KBM-7 (cell line): ENCODE measurements at regions of chr17 and their contacts with region 1.

Region 1: DNA sequence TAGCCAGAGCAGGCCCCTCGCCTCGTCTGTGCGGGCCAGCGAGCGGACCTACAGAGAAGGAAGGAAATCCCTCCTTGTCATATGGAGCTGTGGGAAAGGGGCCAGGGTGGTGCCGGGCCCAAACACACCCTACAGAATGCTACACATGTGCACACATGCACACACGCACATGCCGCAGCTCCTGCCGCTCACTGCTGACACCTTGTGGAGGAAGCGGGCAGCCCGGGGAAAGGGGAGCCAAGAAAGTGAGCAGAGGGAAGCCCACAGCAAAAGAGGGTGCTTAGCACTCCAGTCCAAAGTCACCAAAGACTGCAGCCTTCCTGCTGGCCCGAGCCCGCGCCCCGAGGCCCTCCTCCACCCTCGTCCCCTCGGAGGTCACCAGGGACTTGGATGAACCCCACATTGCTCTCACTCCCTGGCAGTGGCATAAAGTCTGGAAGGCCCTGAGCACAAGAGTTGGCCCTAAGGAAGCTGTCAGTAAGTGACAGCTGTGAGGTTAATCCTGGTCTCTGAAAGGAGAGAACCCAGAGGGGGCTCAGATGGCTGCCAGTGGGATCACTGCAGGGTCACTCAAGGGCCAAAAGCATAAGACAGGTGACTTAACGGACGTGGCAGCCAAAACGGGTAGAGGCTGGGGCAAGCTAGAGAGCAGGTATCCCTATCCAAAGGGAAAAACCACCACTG is 68.2 kb downstream of the MYO18A start:
- DNase-seq: peak; percentile 77

Region 2: GRCh38 chr17:28433721-28434120 is 678.2 kb before region 1 on chr17:
- in situ Hi-C with region 1: no loop called
- DNase-seq: no peak

Region 3: DNA sequence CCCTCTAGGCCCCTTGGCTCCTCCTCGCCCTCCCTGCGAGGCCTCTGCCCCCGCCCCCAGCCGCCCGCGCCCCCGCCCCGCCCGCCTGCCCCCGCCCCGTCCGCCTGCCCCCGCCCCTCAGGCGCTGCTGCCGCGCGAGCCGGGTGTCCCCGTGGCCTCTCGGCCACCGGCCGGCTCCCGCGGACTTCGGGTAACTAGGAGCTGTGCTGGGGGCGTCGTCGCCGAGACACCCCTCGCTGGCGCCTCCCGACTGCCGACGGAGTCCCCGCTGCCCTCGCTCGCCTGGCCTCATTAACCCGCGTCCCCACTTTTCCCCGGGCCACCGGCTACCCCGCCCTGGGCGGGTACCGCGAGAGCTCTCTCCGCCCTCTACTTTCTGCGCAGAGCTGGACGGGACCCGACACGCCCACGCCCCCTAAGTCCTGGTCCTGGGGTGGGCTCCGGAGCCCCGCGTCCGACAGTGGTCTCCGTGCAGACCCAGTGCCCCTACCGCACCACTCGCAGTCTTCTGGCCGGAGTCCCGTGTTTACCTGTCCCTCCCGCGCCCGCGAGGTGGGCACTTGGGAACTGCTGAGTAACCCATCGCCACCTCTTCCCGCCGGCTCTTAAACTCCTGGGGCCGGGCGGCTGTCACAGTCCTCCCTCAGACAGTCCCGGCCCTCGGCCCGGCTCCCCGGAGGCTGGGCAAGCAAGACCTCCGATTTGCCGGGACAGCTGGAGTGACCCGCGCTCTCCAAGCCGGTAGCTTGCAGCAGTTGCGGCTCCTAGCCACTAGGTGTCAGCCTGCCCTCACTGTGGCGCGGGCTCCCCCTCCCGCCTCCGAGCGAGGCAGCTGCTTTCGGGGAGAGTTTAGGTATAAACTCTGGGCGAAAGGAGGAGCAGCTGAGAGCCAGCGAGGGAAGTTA is 385.5 kb before region 1 on chr17 and contains the start of gene TLCD1:
- in situ Hi-C with region 1: loop called (anchors 25 kb)
- DNase-seq: peak; percentile 98

Region 4: DNA sequence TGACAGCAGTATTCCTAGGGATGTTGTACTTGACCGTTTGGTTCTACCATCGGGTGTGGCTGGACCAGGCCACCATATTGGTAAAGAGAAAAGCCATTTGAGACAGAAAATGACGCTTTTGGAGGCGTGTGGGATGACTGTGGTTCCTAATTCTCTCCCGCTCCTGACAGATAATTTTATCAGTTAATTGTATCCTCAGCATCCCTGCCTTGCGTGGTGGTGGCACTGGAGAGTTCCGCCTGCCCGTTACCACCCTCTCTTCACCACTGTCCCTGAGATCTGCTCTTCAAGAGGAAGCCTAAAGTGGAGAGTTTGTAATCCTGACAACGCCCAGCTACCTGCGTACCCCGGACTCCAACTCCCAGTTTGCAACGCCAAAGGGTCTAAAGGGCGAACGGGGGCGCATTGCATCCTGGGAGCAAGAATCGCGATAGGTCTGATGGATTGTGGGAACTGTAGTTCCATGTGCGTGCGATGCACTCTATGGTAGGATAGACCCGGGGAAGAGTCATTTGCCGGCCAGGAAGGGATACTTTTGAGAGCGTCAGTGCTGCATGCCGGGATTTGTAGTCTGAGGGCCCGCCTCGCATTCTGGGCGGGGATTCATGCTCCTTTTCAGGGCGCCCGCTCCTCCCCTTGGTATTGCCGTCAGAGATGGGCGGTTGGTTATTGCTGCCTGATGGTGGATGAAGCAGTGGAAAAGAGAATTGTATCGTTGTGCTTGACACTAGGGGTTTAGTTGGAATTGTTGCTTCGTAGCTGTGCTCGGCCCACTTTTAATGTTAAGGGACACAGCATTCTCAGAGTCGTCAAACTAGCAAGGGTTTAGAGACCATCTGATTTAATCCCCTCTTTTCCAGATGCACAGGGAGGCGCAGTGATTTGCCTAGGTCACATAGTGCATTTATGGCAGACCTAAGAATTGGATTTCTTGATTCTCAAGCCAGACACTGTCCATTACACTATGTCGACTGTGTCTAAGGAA is 159.7 kb before region 1 on chr17:
- in situ Hi-C with region 1: loop called (anchors 10 kb)
- DNase-seq: peak; percentile 99

Region 5: DNA sequence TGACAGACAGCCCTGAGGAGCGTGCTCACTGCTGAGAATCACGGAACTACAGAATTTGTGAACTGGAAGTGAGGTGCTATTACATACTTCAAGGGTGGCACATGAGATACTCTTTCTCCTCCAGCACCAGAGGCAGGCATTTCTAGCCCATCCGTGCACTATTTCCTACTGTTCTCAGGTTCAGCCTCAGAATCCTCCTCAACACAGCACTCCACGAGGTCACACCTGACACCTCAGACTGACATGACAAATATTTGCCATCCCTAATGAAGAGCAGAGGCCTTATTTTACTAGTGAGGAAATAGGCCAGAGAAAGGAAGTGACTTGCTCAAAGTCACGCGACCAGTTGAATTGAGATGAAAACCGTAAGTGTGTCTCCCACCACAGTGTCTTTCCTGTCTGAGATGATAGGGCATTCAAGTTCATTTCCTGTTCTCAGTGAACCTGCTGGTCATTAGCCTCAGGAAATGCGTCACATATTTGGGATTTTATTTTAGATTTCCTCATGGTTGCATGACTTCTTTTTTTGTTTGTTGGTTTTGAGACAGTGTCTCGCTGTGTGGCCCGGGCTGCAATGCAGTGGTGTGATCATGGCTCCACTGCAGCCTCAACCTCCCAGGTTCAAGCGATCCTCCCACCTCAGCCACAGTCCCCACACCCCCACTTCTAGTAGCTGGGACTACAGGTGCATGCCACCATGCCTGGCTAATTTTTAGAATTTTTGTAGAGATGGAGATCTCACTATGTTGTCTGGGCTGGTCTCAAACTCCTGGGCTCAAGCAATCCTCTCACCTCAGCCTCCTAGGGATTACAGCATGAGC is 129.6 kb before region 1 on chr17:
- in situ Hi-C with region 1: loop called (anchors 10 kb)
- DNase-seq: peak; percentile 91